H1 (cell line): ENCODE measurements at regions of chr6 and their contacts with region 1.

Region 1: GRCh38 chr6:159789377-159790148 is at the start of gene TCP1:
- DNase-seq: peak; percentile 96 to 97
- H3K4me3 ChIP-seq: peak within 1 kb of the TSS; percentile 78 to 94 (median 90)
- H3K27ac ChIP-seq: peak within 1 kb of the TSS; percentile 91
- H3K4me1 ChIP-seq: peaks cover 0 to 12% (median 7%) of the 10 kb centered on the region in 4 experiments; a peak in 4 of 7 replicates
- H3K27me3 ChIP-seq: no peaks in the 10 kb centered on the region
- CTCF ChIP-seq: no peak; a peak in 1 of 4 replicates
- EP300 ChIP-seq: no peak
- POLR2A ChIP-seq: peak; percentile 77 to 89; a peak in 2 of 3 replicates
- RAD21 ChIP-seq: no peak; a peak in 1 of 4 replicates
- total RNA-seq, gene TCP1: 331 and 348 TPM in 2 replicates

Region 2: GRCh38 chr6:159726918-159727716 is 62.4 kb before region 1 on chr6 and contains the start of gene WTAP:
- CTCF ChIA-PET with region 1: no interaction called
- POLR2A ChIA-PET with region 1: interaction called, 80 read pairs
- DNase-seq: peak; percentile 82 to 96
- H3K4me3 ChIP-seq: peak within 1 kb of the TSS; percentile 82 to 99 (median 96)
- H3K27ac ChIP-seq: peak within 1 kb of the TSS; percentile 100
- H3K4me1 ChIP-seq: peaks cover 0 to 5% (median 2%) of the 10 kb centered on the region in 4 experiments; a peak in 3 of 7 replicates
- H3K27me3 ChIP-seq: no peaks in the 10 kb centered on the region
- CTCF ChIP-seq: no peak
- EP300 ChIP-seq: peak in 1 of 2 experiments; percentile 36; a peak in 1 of 3 replicates
- POLR2A ChIP-seq: peak; percentile 97 to 98
- RAD21 ChIP-seq: no peak
- total RNA-seq, gene WTAP: 112 and 120 TPM in 2 replicates

Region 3: GRCh38 chr6:159777240-159777904 is 12.2 kb before region 1 on chr6:
- CTCF ChIA-PET with region 1: interaction called, 3 read pairs
- POLR2A ChIA-PET with region 1: interaction called, 12 read pairs
- DNase-seq: no peak
- H3K4me3 ChIP-seq: no peak overlapping the region
- H3K27ac ChIP-seq: no peak overlapping the region
- H3K4me1 ChIP-seq: no peaks in the 10 kb centered on the region
- H3K27me3 ChIP-seq: no peaks in the 10 kb centered on the region
- CTCF ChIP-seq: no peak
- EP300 ChIP-seq: no peak
- POLR2A ChIP-seq: 0 out of 3 replicates have a peak, but pooled peaks of 1 of the 2 experiments have one; percentile 34
- RAD21 ChIP-seq: no peak

Region 4: GRCh38 chr6:159815410-159815809 is 25.8 kb after region 1 on chr6:
- CTCF ChIA-PET with region 1: no interaction called
- POLR2A ChIA-PET with region 1: interaction called, 16 read pairs
- DNase-seq: no peak
- H3K4me3 ChIP-seq: no peak overlapping the region
- H3K27ac ChIP-seq: no peak overlapping the region
- H3K4me1 ChIP-seq: peaks cover 0 to 13% (median 5%) of the 10 kb centered on the region in 4 experiments; a peak in 5 of 7 replicates
- H3K27me3 ChIP-seq: no peaks in the 10 kb centered on the region
- CTCF ChIP-seq: no peak
- EP300 ChIP-seq: no peak
- POLR2A ChIP-seq: no peak
- RAD21 ChIP-seq: no peak